GM10248 (cell line): ENCODE measurements at regions of chr2 and their contacts with region 1.

Region 1: DNA sequence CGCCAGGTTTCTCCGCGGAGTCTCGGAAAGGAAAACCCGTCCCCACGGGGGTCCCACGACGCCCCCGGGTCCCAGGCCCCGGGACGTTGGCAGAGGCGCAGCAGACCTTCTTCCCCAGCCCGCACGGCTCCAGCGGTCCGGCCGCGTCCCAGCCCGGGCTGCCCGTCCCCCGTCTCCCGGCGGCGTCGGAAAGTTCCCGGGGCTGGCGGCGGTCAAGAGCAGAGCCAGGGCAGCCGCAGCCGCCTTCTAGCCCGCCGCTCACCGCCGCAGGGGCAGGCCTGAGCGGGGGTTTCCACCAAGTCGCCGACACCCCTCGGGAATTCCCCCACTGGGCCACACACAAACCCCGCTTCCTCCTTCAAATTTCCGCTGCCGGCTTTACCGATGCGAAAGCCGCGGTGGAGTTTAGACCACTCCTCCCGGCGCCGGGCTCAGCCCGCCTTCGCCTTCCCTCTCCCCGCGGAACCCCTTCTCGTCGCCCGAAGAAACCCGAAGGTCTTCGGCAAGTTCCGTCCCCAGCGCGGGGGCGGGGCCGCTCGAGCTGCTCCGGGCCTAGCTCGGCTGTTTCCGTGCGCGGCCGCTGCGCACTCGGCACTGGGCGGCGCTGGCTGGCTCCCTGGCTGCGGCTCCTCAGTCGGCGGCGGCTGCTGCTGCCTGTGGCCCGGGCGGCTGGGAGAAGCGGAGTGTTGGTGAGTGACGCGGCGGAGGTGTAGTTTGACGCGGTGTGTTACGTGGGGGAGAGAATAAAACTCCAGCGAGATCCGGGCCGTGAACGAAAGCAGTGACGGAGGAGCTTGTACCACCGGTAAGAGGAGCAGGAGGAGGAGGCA is at the start of gene CREB1:
- DNase-seq: peak; percentile 98
- CTCF ChIP-seq: peak; percentile 47

Region 2: DNA sequence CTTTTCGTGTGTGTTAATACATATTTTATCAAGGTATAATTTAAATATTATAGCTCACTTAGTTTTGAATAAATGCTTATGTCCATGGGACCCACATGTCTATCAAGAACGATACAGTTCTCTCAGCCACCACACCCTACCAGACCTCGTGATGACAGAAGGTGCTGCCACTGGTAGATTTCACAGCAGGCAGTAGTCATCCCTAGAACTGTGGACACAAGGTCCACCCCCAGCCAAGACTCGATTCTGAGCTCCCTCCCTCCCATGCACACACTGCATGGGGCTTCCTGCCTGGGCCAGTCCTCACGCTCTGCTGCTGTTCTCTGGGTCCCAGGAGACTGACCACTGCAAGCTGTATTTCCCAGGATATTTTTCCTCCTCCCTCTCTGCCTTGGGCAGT is 26.3 kb before region 1 on chr2:
- CTCF ChIA-PET with region 1: interaction called, 28 read pairs
- POLR2A ChIA-PET with region 1: interaction called, 13 read pairs
- DNase-seq: peak; percentile 56
- CTCF ChIP-seq: no peak

Region 3: GRCh38 chr2:207541933-207542332 is 12.4 kb after region 1 on chr2:
- CTCF ChIA-PET with region 1: interaction called, 11 read pairs
- POLR2A ChIA-PET with region 1: interaction called, 5 read pairs
- DNase-seq: no peak
- CTCF ChIP-seq: no peak

Region 4: GRCh38 chr2:207549145-207549544 is 19.6 kb after region 1 on chr2:
- CTCF ChIA-PET with region 1: interaction called, 14 read pairs
- POLR2A ChIA-PET with region 1: interaction called, 6 read pairs
- DNase-seq: no peak
- CTCF ChIP-seq: no peak